ENCODE measurements at regions of chr3 and their contacts with region 1.

Region 1: DNA sequence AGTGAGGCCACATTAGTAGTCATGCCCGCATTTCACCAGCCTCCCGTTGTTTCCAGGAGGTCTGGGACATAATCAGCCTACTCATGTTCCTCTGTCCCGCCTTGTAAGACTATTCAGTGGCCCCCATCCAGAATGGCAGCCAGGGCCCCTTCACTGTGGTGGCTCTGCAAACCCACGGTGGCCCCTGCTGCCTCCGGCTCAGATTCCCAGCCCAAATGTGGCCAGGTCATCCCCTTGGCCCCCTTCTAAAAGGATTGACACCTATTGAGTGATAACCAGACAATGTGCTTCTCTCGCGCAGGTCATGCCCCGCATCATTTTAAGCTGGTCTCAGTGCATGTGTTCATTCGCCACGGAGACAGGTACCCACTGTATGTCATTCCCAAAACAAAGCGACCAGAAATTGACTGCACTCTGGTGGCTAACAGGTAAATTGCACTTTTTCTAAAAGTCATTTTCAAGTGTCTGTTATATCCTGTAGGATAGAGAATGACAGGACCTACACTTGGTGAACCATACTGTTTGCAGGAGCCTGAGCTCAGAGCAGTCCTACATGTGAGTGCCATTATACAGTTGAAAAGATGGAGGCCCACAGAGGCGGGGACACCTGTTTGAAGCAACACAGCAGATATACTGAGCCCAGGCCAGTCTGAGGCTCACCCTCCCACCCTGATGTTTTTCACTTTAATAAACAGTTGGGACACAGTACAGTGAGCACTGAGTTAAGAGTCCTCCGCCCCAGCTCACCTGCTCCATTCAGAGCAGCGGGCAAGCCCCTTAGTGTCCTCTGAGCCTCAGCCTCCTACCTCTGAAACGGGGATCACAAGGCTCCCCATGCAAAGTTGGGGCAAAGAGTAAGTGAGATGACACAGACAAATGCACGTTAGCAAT is 47.7 kb downstream of the PXYLP1 start:
- DNase-seq: no peak
- H3K4me3 Mint-ChIP-seq: no peak overlapping the region
- H3K27ac Mint-ChIP-seq: no peak overlapping the region
- H3K4me1 Mint-ChIP-seq: peaks cover 20% of the 10 kb centered on the region
- H3K27me3 Mint-ChIP-seq: no peaks in the 10 kb centered on the region

Region 2: GRCh38 chr3:141237701-141238521 is 41.4 kb before region 1 on chr3:
- CTCF ChIA-PET with region 1: interaction called, 84 read pairs
- POLR2A ChIA-PET with region 1: no interaction called
- intact Hi-C with region 1: no loop called
- DNase-seq: peak; percentile 67
- H3K4me3 Mint-ChIP-seq: peak overlapping the region; percentile 4
- H3K27ac Mint-ChIP-seq: peak overlapping the region; percentile 65
- H3K4me1 Mint-ChIP-seq: peaks cover 38% of the 10 kb centered on the region
- H3K27me3 Mint-ChIP-seq: no peaks in the 10 kb centered on the region

Region 3: GRCh38 chr3:141261472-141262307 is 17.6 kb before region 1 on chr3:
- CTCF ChIA-PET with region 1: interaction called, 9 read pairs
- POLR2A ChIA-PET with region 1: interaction called, 4 read pairs
- intact Hi-C with region 1: loop called (anchors 1 kb)
- DNase-seq: peak; percentile 68
- H3K4me3 Mint-ChIP-seq: no peak overlapping the region
- H3K27ac Mint-ChIP-seq: peak overlapping the region; percentile 71
- H3K4me1 Mint-ChIP-seq: peaks cover 42% of the 10 kb centered on the region
- H3K27me3 Mint-ChIP-seq: no peaks in the 10 kb centered on the region

Region 4: GRCh38 chr3:141303481-141304223 is 24.3 kb after region 1 on chr3:
- CTCF ChIA-PET with region 1: interaction called, 7 read pairs
- POLR2A ChIA-PET with region 1: no interaction called
- intact Hi-C with region 1: loop called (anchors 2 kb)
- DNase-seq: peak; percentile 56
- H3K4me3 Mint-ChIP-seq: no peak overlapping the region
- H3K27ac Mint-ChIP-seq: no peak overlapping the region
- H3K4me1 Mint-ChIP-seq: peaks cover 44% of the 10 kb centered on the region
- H3K27me3 Mint-ChIP-seq: no peaks in the 10 kb centered on the region